Activated CD4-positive, alpha-beta T cell treated with anti-CD3 and anti-CD28 coated beads, Interleukin-2, amount 10 ng/mL, durations not matched to agents 7 days and 5 days (primary cell): ENCODE measurements at regions of chr1 and their contacts with region 1.

Region 1: GRCh38 chr1:212455803-212456528 is 23.2 kb downstream of the NENF start:
- DNase-seq: peak; percentile 84
- H3K4me3 Mint-ChIP-seq: no peak overlapping the region
- H3K27ac Mint-ChIP-seq: no peak overlapping the region
- H3K4me1 Mint-ChIP-seq: peaks cover 10% of the 10 kb centered on the region
- H3K27me3 Mint-ChIP-seq: no peaks in the 10 kb centered on the region

Region 2: DNA sequence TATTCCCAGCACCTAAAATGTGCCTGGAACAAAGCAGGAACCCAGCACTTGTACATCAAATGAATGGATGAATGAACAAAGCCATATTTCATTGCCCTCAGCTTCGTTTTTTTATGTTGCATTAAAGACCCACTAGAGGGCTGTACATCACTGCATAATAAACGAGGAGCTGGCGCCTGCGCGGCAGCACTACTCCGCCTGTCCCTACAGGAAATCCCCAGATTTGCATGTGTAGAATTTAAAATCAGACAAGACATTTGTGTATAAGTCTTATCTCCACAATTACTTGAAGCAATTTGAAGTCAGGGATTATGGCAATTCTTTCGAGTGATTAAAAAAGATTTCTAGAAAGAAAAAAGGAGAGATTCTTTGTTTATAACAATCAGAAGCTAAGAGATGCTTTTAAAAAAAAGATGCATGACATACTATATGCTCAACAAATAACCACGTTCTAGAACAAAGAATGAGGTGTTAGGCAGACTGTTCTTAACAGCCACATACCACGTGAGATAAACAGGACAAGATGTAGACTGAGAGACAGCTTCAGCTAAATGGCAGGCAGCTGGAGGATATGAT is 775.1 kb before region 1 on chr1:
- CTCF ChIA-PET with region 1: interaction called, 39 read pairs
- POLR2A ChIA-PET with region 1: no interaction called
- DNase-seq: peak; percentile 82
- H3K4me3 Mint-ChIP-seq: no peak overlapping the region
- H3K27ac Mint-ChIP-seq: peak overlapping the region; percentile 75
- H3K4me1 Mint-ChIP-seq: peaks cover 16% of the 10 kb centered on the region
- H3K27me3 Mint-ChIP-seq: no peaks in the 10 kb centered on the region

Region 3: GRCh38 chr1:212035123-212035834 is 420.7 kb before region 1 on chr1 and contains the starts of genes DTL and INTS7:
- CTCF ChIA-PET with region 1: interaction called, 10 read pairs
- POLR2A ChIA-PET with region 1: no interaction called
- DNase-seq: peak; percentile 99
- H3K4me3 Mint-ChIP-seq: peak within 1 kb of the TSS; percentile 94
- H3K27ac Mint-ChIP-seq: peak within 1 kb of the TSS; percentile 97
- H3K4me1 Mint-ChIP-seq: peaks cover 64% of the 10 kb centered on the region
- H3K27me3 Mint-ChIP-seq: no peaks in the 10 kb centered on the region
- total RNA-seq, gene DTL: 64.9 to 72.1 TPM
- total RNA-seq, gene INTS7: 29.9 to 34.8 TPM

Region 4: DNA sequence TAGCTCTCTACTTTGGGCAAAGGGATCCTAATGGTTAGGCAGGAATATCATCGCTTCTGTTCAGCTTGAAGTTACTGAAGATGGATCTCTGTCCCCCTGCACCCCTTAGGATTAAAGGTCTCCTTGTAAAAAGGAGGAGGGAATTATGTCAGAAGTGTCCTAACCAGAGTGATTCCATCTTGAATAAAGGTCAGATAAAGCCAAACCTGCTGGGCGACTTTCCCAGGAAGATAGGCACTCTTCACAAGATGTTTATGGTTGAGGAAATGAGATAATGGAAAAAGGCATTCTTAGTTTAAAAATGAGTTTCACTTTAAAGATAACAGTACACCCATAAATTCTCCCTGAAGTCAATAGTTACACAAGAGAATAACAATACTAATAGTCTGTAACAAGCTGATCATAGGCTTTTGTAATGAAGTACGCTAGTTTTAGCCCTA is 25.0 kb before region 1 on chr1:
- CTCF ChIA-PET with region 1: interaction called, 15 read pairs
- POLR2A ChIA-PET with region 1: no interaction called
- DNase-seq: no peak
- H3K4me3 Mint-ChIP-seq: no peak overlapping the region
- H3K27ac Mint-ChIP-seq: no peak overlapping the region
- H3K4me1 Mint-ChIP-seq: peaks cover 22% of the 10 kb centered on the region
- H3K27me3 Mint-ChIP-seq: peaks cover 13% of the 10 kb centered on the region

Region 5: DNA sequence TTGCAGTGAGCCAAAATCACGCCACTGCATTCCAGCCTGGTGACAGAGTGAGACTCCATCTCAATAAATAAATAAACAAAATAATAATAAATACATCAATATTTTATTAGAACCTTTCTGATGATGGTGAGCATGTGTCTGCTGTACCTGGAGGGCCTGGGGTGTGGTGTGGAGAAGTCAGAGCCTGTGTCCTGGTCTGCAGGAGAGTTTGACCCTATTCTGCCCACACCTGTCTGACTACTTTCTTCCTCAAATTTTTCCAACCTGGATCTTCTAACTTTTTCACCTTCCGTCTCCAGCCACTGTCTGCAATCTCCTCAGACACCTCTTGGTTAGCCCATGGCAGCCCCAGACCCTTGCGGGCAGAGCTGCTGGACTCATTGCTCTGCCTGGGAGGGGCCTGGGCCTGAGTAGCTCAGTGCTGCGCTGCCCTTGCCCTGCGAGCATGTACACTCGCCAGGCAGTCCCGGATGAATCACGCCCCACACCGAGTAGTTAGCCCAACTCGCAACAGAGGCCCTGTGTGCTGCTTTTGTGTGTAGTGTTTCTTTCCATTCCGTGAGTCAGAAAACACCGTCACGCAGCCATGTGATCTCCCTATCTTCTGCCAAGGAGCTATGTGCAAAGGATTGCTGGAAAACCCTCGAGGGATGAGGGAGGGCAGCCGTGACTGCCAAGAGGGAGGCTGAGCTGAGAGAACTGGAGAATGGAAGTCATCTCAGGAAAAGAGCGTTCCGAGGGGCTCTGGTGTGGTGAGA is 13.9 kb after region 1 on chr1:
- CTCF ChIA-PET with region 1: interaction called, 51 read pairs
- POLR2A ChIA-PET with region 1: no interaction called
- DNase-seq: no peak
- H3K4me3 Mint-ChIP-seq: no peak overlapping the region
- H3K27ac Mint-ChIP-seq: no peak overlapping the region
- H3K4me1 Mint-ChIP-seq: peaks cover 9% of the 10 kb centered on the region
- H3K27me3 Mint-ChIP-seq: peaks cover 5% of the 10 kb centered on the region

Region 6: DNA sequence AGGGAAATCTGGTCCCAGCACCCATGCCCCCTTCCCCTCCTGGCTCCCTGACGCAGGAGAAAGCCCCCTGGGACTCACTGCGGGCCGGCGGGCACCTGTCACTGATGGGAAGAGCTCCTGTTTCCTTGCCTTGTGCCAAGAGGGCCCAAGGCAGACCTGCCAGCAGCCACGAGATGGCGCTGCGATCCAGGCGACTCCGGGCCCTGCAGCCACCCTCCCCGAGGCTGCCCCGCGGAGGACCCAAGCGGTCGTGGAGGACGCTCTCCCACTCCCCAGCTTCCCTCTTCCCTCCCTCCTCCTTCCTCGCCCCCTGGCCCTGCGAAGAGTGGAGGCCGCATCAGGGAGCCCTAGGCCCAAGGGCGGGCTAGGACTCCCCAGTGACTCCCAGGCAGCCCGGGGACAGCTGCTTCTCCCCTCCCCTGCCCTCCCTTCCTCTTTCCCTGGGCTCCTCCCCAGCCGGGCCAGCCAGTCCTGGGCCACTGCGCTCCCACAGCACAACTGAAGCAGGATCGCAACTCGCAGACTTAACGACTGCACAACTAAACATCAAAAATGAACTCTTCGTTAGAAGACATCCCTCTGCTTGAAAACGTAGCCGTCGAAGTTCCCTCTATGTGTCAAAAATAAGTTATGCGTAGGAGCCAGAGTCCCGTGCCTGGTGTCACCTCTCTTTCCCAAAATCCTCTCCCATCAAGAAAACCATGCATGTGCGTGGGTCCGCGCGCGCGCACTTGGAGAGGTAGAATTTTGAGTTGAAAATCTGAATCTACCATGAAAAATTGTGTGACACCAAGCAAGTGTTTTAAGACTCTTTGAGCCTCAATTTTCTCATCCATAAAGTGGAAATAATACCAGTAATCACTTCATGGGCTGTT is 209.5 kb after region 1 on chr1:
- CTCF ChIA-PET with region 1: interaction called, 14 read pairs
- POLR2A ChIA-PET with region 1: no interaction called
- DNase-seq: peak; percentile 80
- H3K4me3 Mint-ChIP-seq: peak overlapping the region; percentile 74
- H3K27ac Mint-ChIP-seq: peak overlapping the region; percentile 74
- H3K4me1 Mint-ChIP-seq: peaks cover 22% of the 10 kb centered on the region
- H3K27me3 Mint-ChIP-seq: peaks cover 20% of the 10 kb centered on the region